Endothelial cell of umbilical vein (primary cell): ENCODE measurements at regions of chr12 and their contacts with region 1.

Region 1: GRCh38 chr12:130838951-130839769 is at the start of gene STX2:
- DNase-seq: peak; percentile 88
- H3K4me3 ChIP-seq: peak within 1 kb of the TSS; percentile 78 to 96 (median 87)
- H3K27ac ChIP-seq: no peak within 1 kb of the TSS
- H3K4me1 ChIP-seq: peaks cover 5% of the 10 kb centered on the region
- H3K27me3 ChIP-seq: no peaks in the 10 kb centered on the region
- CTCF ChIP-seq: peak; percentile 13 to 44
- POLR2A ChIP-seq: no peak
- total RNA-seq, gene STX2: 30.7 and 32.6 TPM in 2 replicates

Region 2: DNA sequence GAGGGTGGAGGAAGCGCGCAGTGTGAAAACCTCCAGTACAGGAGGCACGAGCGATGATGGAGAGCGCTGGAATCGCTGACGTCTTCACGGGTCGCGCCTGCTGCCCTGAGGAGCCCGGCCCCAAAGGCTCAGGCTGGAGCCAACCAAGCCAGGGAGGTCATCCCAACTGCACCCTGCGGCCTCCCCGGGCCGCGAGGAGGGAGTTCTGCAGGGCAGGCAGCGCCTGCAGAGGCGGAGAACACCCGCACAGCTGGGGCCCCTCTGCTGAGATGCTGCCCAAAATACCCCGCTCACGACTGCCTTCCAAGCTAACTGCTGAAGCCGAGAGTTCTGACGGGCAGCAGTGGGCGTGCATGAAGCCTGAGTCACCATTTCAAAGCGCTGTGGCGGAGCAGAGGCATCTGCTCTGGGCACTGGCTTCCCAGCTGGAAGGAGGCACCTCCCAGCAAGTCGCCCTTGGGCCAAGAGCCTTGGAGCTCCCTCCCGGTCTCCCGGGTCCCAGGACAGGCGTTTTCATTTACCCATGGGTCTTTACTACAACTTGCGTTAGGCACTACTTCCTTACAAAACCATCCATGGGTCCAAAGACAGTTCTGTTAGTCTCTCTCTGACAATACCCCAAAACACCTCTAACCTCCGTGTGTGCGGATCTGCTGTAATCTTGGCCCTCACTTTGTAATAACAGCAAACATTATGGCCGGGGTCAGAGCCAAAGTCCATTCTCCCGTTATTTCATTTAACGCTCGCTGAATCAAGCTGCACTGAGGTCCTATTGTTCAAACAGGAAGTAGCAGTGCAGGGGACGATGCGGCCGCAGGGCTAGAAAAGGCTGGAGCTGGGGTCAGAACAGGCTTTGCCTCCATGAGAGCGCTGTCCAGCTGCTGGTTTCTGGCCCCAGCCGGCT is 63.0 kb before region 1 on chr12:
- CTCF ChIA-PET with region 1: no interaction called
- POLR2A ChIA-PET with region 1: no interaction called
- dilution Hi-C with region 1: no loop called
- intact Hi-C with region 1: loop called (anchors 1 kb)
- DNase-seq: peak; percentile 75
- H3K4me3 ChIP-seq: peak overlapping the region in 1 of 3 experiments; percentile 50
- H3K27ac ChIP-seq: no peak overlapping the region
- H3K4me1 ChIP-seq: peaks cover 7% of the 10 kb centered on the region
- H3K27me3 ChIP-seq: no peaks in the 10 kb centered on the region
- CTCF ChIP-seq: no peak
- POLR2A ChIP-seq: no peak

Region 3: DNA sequence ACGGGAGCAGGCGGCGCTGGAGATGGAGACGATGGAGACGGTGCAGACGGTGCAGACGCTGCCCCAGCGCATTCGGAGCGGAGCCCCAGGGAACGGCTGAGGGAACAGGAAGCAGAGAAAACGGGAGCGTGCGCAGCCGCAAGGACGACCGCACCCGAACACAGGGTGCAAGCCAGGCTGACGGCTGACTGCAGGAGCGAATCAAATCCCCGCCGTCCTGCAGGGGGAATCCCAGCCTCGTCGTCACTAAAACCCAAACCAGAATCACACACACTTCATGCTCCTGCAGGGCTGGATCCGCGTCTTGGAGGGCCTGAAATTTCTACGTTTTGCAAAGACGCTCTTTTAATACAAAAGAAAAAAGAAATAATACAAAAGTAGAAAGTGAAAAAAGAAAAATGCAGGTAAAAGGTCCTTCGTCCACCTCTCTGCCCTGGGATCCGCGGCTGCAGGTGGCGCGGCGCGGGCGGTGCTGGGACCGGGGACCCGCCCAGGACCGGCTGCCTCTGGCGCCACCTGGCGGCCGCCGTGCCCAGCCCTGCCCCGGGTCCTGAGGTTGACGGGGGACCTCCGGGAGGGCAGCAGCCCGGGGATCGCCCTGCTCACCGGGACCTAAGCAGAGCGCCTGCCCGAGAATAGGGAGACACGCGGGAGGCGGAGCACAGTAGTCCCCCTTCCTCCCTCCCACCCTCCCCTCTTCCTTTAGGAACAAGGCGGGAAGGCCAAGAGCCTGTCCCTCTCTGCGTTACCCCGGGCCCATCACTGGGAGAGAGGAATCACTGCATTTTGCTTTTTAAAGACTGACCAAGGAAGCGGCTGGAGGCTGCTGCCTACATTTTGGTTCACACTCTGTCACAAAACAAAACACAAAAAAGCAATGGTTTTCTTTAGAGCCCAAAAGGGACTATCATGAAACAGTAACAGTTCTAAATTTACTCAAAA is 20.3 kb before region 1 on chr12:
- CTCF ChIA-PET with region 1: interaction called, 11 read pairs
- POLR2A ChIA-PET with region 1: no interaction called
- dilution Hi-C with region 1: no loop called
- intact Hi-C with region 1: no loop called
- DNase-seq: peak; percentile 36
- H3K4me3 ChIP-seq: peak overlapping the region; percentile 33 to 67 (median 66)
- H3K27ac ChIP-seq: no peak overlapping the region
- H3K4me1 ChIP-seq: no peaks in the 10 kb centered on the region
- H3K27me3 ChIP-seq: no peaks in the 10 kb centered on the region
- CTCF ChIP-seq: peak; percentile 78 to 85
- POLR2A ChIP-seq: no peak

Region 4: DNA sequence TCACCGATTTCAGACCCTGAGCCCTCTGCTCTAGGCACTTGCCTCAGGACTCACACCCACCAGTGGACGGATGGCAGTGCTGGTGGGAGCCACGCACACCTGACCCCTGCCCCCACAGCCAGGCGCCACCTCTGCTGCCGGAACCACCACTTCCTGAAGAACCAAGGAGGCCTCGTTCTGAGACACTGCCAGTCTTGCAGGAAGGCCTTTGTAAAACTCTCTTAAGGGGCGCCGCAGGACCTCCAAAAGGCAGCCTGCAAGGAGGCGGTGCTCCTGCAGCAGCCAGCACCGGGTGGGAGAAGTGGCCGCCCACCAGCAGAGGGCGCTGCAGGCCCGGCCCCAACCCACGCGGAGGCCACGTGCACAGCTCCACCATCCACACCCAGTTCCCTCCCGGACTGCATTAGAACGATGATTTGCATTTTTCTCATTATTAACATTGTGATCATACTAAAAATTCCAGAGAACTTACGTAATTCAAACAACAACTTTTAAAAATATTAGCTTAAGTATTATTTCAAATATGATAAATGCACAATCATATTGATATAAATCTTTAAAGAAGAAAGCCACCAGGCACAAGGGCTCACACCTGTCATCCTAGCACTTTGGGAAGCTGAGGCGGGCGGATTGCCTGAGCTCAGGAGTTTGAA is 12.9 kb before region 1 on chr12:
- CTCF ChIA-PET with region 1: interaction called, 11 read pairs
- POLR2A ChIA-PET with region 1: no interaction called
- dilution Hi-C with region 1: no loop called
- intact Hi-C with region 1: no loop called
- DNase-seq: peak; percentile 7
- H3K4me3 ChIP-seq: no peak overlapping the region
- H3K27ac ChIP-seq: no peak overlapping the region
- H3K4me1 ChIP-seq: no peaks in the 10 kb centered on the region
- H3K27me3 ChIP-seq: no peaks in the 10 kb centered on the region
- CTCF ChIP-seq: peak; percentile 60 to 77
- POLR2A ChIP-seq: no peak

Region 5: GRCh38 chr12:130871286-130872178 is 32.4 kb after region 1 on chr12 and contains the start of gene RAN:
- CTCF ChIA-PET with region 1: no interaction called
- POLR2A ChIA-PET with region 1: no interaction called
- dilution Hi-C with region 1: no loop called
- intact Hi-C with region 1: loop called (anchors 1 kb)
- DNase-seq: peak; percentile 89
- H3K4me3 ChIP-seq: peak within 1 kb of the TSS; percentile 69 to 99 (median 96)
- H3K27ac ChIP-seq: peak within 1 kb of the TSS; percentile 70
- H3K4me1 ChIP-seq: peaks cover 23% of the 10 kb centered on the region
- H3K27me3 ChIP-seq: no peaks in the 10 kb centered on the region
- CTCF ChIP-seq: no peak
- POLR2A ChIP-seq: peak; percentile 89
- total RNA-seq, gene RAN: 1,205 and 1,212 TPM in 2 replicates